Right cardiac atrium (tissue), 5 donors: ENCODE measurements at regions of chr10 and their contacts with region 1.

Region 1: DNA sequence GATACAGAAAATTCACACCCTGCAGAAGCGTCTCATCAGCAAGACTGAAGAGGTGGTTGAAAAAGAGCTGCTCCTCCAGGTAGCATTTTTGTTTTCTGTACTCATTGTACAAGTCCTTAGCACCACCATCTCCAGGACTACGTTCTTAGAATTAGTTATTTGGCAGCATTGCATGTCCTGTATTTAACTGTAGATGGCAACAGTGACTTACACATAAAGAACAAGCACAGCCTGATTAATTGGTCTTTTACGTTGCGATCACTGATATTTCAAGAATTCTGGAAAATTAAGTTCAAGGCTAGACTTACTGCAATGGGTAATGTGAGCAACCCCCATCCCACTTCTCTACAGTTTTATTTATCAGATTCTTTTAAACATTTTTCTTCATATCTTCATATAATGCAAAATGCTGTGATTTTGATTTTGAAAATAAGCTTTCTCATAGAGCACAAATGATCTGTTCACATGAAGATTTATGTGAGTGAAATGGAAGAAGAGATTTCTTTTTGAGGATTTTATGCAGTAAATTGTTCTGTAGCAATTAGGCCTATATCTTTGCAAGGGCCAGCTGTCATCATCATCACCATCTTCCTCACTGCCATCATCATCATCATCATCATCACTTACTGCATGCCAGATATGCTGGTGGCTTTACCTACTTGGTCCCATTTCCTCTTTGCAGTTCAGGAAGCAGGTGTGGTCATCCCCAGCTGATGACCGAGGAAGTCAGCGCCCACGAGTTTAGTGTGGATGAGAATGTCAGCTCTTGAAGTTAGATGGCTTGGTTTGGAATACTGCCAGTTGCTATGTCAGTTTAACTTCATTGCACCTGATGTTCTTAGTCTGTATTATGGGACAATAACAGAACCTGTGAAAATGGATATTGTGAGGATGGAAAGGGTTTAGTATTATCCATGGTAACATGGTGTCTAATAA is 53.4 kb downstream of the CFAP58 start:
- DNase-seq: no peak
- ATAC-seq: peak; percentile 45 to 47
- H3K4me3 ChIP-seq: no peak overlapping the region
- H3K27ac ChIP-seq: no peak overlapping the region
- H3K4me1 ChIP-seq: no peaks in the 10 kb centered on the region
- H3K27me3 ChIP-seq: no peaks in the 10 kb centered on the region

Region 2: DNA sequence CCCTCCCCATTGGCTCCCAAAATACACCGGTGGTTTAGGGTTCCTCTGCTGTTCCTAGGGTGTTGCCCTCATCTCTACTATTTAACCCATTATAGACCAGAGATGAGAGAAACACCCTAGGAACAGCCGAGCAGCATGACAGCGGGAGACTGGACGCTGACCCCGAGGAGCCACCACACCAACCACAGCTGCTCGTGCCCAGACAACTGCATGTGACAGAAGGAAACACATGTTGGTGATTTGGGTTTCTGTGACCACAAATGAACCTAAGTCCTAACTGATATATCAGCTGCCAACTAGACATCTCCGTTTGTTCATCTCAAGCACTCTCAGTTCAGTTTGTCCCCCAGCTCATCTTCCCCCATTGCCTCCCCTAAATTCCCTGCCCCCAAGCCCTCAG is 188.2 kb before region 1 on chr10:
- intact Hi-C with region 1: no loop called
- DNase-seq: no peak
- ATAC-seq: no peak
- H3K4me3 ChIP-seq: no peak overlapping the region
- H3K27ac ChIP-seq: no peak overlapping the region
- H3K4me1 ChIP-seq: no peaks in the 10 kb centered on the region
- H3K27me3 ChIP-seq: no peaks in the 10 kb centered on the region

Region 3: GRCh38 chr10:104337974-104338735 is 68.8 kb before region 1 on chr10 and contains the start of gene ITPRIP:
- intact Hi-C with region 1: no loop called
- DNase-seq: peak; percentile 81 to 91 (median 88)
- ATAC-seq: peak; percentile 80 to 89
- H3K4me3 ChIP-seq: peak within 1 kb of the TSS; percentile 91
- H3K27ac ChIP-seq: peak within 1 kb of the TSS; percentile 100
- H3K4me1 ChIP-seq: peaks cover 26% of the 10 kb centered on the region
- H3K27me3 ChIP-seq: no peaks in the 10 kb centered on the region
- total RNA-seq, gene ITPRIP: 29.1 to 83.3 (median 41.9) TPM

Region 4: GRCh38 chr10:104580774-104581675 is 174.0 kb after region 1 on chr10:
- intact Hi-C with region 1: loop called in 1 of 4 experiments (anchors 10 kb)
- DNase-seq: peak; percentile 67 to 85 (median 70)
- ATAC-seq: peak; percentile 83 to 85
- H3K4me3 ChIP-seq: peak overlapping the region; percentile 12
- H3K27ac ChIP-seq: no peak overlapping the region
- H3K4me1 ChIP-seq: no peaks in the 10 kb centered on the region
- H3K27me3 ChIP-seq: no peaks in the 10 kb centered on the region

Region 5: DNA sequence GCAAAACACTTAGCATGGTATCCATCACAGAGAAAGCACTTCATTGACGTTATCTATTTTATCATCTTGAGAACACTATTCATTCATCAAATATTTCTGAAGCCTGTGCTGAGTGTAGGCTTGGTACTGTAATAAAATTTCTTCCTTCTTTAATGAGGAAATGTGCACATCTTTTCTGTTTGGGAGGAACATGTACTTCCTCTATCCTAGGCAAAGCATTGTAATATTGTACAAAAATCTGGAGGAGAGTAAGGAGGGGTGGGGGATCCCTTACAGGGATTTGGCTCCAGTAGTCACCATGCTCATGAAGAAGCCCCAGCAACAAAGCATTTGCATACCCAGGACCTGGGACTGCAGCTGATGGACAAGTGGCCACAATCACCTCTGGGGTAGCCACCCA is 194.2 kb after region 1 on chr10:
- intact Hi-C with region 1: loop called in 1 of 4 experiments (anchors 10 kb)
- DNase-seq: no peak
- ATAC-seq: no peak
- H3K4me3 ChIP-seq: no peak overlapping the region
- H3K27ac ChIP-seq: no peak overlapping the region
- H3K4me1 ChIP-seq: no peaks in the 10 kb centered on the region
- H3K27me3 ChIP-seq: no peaks in the 10 kb centered on the region

Region 6: DNA sequence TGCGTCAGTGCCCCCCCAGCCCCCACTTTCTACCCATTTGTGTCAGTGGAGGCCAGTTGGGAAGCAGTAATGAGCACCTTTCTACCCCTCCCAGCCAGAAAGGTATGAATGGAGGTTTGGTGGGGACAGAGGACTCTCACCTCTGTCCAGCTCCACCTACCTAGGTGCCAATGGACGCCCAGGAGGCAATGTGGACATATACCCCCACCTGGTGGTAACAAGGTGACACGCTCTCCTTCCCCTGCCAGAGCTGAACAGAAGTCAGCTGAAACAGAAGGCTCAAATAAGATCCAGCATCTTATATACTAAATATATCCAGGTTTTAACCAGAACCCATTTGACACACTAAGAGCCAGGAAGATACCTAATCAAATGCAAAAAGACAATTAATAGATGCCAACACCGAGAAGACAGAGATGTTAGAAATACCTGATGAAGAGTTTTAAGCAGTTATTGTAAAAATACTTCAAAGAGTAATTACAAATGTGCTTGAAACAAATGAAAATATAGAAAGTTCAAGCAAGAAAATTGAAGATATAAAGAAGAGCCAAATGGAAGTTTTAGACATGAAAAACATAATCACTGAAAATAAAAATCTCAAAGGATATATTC is 215.7 kb after region 1 on chr10:
- intact Hi-C with region 1: loop called in 3 of 4 experiments (anchors 5 to 10 kb)
- DNase-seq: no peak
- ATAC-seq: no peak
- H3K4me3 ChIP-seq: no peak overlapping the region
- H3K27ac ChIP-seq: no peak overlapping the region
- H3K4me1 ChIP-seq: no peaks in the 10 kb centered on the region
- H3K27me3 ChIP-seq: no peaks in the 10 kb centered on the region

Region 7: DNA sequence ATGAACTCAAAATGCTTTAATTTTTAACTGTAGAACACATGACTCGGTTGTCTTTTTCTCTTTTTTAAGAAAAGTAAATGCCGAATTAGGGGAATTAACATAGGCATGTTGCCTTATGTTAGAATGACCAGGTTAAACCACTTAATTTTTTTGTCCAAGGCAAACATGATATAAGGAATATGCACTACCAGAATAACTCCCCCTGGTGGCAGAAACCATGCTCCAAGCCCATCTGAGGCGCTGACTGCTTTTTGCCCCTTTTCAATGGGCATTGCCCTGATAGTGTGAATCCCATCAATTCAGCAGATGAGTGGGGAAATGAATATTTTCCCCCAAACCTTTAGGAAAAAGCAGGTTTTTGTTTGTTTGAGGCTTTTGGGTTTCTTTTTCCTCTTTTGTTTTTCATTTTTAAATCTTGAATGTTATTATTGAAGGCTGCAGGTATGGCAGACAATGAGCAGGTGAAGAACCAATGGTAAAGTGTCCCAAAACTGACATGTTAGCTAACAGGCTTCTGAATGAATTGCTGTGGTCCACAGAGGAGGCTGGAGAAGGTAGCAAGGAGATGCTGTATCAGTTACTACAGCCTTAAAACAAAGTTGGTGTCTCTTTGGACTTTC is 518.4 kb after region 1 on chr10:
- intact Hi-C with region 1: loop called in 1 of 4 experiments (anchors 10 kb)
- DNase-seq: no peak
- ATAC-seq: no peak
- H3K4me3 ChIP-seq: no peak overlapping the region
- H3K27ac ChIP-seq: no peak overlapping the region
- H3K4me1 ChIP-seq: no peaks in the 10 kb centered on the region
- H3K27me3 ChIP-seq: no peaks in the 10 kb centered on the region